Activated CD4-positive, alpha-beta memory T cell treated with anti-CD3 and anti-CD28 coated beads for 36 hours (primary cell): ENCODE measurements at regions of chr19 and their contacts with region 1.

Region 1: GRCh38 chr19:5803752-5804515 is 933 bp upstream of the NRTN start:
- DNase-seq: peak; percentile 97
- H3K4me3 Mint-ChIP-seq: peak overlapping the region; percentile 66
- H3K27ac Mint-ChIP-seq: no peak overlapping the region
- H3K4me1 Mint-ChIP-seq: peaks cover 21% of the 10 kb centered on the region
- H3K27me3 Mint-ChIP-seq: peaks cover 22% of the 10 kb centered on the region

Region 2: GRCh38 chr19:5622463-5623396 is 181.2 kb before region 1 on chr19 and contains the starts of genes SAFB and SAFB2:
- CTCF ChIA-PET with region 1: interaction called, 11 read pairs
- POLR2A ChIA-PET with region 1: interaction called, 5 read pairs
- intact Hi-C with region 1: no loop called
- DNase-seq: peak; percentile 100
- H3K4me3 Mint-ChIP-seq: peak within 1 kb of the TSS; percentile 100
- H3K27ac Mint-ChIP-seq: peak within 1 kb of the TSS; percentile 100
- H3K4me1 Mint-ChIP-seq: peaks cover 67% of the 10 kb centered on the region
- H3K27me3 Mint-ChIP-seq: peaks cover 3% of the 10 kb centered on the region
- total RNA-seq, gene SAFB: 103 to 113 TPM
- total RNA-seq, gene SAFB2: 63.5 to 76.4 TPM

Region 3: DNA sequence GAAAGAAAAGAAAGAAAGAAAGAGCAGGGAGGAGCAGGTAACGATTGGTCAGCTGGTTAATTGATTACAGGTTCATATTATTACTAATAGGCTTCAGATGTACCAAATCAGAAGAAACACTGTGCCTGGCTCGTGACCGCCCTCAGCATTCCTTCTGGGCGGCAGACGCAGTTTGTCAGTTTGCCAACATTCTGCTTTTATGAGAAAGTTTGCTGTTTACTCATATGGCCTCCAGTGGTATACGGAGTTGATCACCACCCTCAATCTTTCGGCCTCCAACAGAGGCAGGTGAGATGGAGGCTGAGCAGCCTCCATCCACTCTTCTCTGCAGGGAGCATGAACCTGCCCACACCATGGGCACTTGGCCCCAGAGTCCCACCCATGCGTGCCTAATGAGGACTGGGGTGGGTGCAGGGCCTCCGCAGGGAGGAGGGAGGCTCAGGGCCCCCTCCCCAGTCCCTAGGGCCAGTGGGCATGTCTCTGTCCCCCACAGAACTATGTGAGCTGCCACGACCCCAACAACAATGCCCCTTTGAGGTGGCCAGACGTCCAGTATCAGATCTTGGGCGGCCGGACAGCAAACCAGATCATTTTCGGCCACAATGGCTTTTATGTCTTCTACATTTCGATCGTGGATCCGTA is 28.1 kb before region 1 on chr19:
- CTCF ChIA-PET with region 1: interaction called, 10 read pairs
- POLR2A ChIA-PET with region 1: no interaction called
- intact Hi-C with region 1: no loop called
- DNase-seq: no peak
- H3K4me3 Mint-ChIP-seq: no peak overlapping the region
- H3K27ac Mint-ChIP-seq: no peak overlapping the region
- H3K4me1 Mint-ChIP-seq: no peaks in the 10 kb centered on the region
- H3K27me3 Mint-ChIP-seq: no peaks in the 10 kb centered on the region

Region 4: DNA sequence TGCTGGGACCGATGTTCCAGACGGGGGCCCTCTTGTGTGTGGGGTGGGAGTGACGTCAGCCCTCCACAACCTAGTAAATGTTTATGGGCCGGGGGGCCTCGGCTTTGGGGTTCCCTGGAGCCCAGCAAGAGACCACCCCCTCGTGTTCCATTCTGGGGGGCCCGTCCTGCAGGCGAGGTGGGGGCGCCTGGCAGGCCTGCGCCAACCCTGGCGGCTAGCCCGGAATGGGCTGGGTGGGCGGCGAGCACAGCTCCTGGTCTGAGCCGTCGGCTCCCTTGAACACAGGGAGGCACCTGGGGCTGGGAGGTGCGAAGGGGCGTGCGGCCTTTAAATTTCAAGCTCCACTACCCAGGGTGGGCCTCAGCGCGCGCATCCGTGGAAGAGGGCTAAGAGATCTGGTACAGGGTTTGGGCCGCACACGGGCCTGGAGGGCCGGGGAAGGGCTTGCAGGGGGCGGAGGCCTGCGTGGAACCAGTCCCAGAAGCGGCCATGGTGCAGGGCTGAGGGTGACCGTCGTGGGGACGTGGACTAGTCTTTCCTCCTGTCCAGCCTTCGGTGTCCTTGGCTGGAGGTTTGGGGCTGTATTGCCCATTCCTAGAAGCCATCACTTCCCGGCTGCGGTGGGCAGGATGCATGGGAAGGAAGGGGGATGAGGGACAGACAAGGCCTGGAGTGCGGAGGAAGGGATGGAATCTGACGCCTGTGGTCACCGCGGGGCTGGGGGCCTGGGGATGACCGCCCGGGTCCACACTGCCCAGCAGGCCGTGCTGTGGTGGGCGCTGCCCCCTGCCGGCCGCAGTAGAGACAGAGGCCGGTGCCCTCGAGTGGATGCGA is 88.2 kb after region 1 on chr19:
- CTCF ChIA-PET with region 1: interaction called, 16 read pairs
- POLR2A ChIA-PET with region 1: no interaction called
- intact Hi-C with region 1: no loop called
- DNase-seq: peak; percentile 27
- H3K4me3 Mint-ChIP-seq: no peak overlapping the region
- H3K27ac Mint-ChIP-seq: no peak overlapping the region
- H3K4me1 Mint-ChIP-seq: peaks cover 3% of the 10 kb centered on the region
- H3K27me3 Mint-ChIP-seq: peaks cover 6% of the 10 kb centered on the region

Region 5: DNA sequence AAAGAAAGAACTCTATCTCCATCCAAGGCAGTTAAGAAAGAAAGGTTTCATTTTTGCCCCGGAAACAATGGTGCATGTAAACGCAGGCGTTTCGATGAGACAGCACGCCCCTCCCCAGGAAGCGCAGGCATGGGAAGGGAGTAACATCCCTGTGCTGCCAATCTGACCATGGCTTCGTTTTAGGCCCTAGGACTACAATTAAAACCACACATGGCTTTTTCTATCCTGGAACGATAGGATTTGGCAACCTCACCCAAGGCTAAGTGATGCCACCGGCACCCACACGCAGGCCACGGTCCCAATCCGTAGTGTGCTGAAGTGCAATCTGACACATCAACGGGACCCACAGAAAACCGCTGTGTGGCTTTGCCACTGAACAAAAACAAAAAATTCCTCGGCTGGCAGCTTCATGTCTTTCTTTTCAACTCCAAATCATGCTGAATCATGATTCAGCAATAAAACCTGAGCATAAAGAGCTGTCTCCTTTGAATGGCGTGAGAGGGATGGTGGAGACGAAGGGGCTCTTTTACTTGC is 149.8 kb after region 1 on chr19:
- CTCF ChIA-PET with region 1: interaction called, 12 read pairs
- POLR2A ChIA-PET with region 1: no interaction called
- intact Hi-C with region 1: no loop called
- DNase-seq: peak; percentile 64
- H3K4me3 Mint-ChIP-seq: peak overlapping the region; percentile 64
- H3K27ac Mint-ChIP-seq: peak overlapping the region; percentile 95
- H3K4me1 Mint-ChIP-seq: peaks cover 91% of the 10 kb centered on the region
- H3K27me3 Mint-ChIP-seq: no peaks in the 10 kb centered on the region

Region 6: DNA sequence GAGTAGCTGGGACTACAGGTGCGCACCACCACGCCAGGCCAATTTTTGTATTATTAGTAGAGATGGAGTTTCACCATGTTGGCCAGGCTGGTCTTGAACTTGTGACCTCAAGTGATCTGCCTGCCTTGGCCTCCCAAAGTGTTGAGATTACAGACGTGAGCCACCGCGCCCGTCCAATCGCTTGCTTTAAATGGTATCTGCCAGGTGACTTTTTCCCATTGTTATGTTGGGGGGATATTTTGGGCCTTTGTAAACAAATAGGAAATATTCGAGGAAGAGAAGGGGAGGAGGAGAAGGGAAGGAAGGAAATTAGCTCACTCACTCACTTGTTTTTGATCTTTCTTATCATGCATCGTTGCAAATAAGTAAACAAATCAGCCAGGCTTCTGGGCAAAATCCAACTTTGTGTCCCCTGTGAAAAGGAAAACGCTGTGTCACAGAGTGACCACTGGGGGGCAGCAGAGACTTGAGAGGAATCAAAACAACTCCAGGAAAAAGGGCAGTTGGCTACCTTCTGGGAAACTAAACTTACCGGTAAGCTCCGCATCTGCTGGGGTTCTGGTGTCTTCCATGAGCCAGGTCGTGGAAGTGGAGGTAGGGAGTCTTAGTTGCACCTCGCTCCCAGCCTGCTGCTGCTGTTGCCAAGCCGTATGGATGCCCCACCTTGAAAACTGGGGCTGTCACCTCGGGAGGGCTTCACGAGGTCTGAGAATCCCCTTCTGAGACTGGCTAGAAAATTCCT is 183.3 kb after region 1 on chr19:
- CTCF ChIA-PET with region 1: interaction called, 31 read pairs
- POLR2A ChIA-PET with region 1: no interaction called
- intact Hi-C with region 1: no loop called
- DNase-seq: peak; percentile 82
- H3K4me3 Mint-ChIP-seq: peak overlapping the region; percentile 67
- H3K27ac Mint-ChIP-seq: no peak overlapping the region
- H3K4me1 Mint-ChIP-seq: peaks cover 30% of the 10 kb centered on the region
- H3K27me3 Mint-ChIP-seq: no peaks in the 10 kb centered on the region